Panc1 (cell line): ENCODE measurements at regions of chr10 and their contacts with region 1.

Region 1: DNA sequence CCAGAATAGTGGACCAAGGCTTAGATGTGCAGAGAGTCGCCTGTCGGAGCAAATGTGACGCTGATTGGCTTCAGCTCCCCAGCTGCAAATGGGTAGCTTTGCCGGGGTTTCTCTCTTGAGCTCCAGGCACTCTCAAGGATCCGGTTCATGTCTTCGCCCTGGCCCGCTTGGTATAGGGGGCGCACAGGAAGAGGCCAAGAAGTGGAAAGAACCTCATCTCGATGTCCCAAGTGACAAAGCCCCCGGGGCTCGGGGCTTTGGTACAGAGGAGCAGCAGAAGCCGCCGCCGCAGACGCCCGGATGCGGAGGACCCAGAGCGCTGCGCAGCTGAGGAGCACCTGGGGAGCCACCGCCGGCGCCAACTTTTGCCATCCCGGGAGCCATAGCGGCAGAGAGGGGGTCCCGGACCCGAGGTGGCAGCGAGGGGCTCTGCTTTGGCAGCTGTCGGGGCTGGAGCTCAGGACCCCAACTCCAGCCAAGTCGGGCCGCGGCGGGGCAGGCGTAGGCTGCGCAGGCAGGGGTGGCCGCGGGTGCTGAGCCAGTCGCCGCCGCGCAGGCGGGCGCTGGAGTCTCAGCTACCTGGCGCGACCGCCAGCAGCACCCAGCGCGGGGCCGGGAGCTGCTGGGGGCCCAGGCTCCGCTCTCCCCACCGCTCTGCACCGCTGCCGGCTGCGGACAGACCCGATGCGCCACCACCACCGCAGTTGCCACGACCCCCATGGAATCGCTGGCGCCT is 466.6 kb downstream of the XPNPEP1 start:
- DNase-seq: no peak
- ATAC-seq: no peak
- H3K4me3 ChIP-seq: no peak overlapping the region
- H3K27ac ChIP-seq: no peak overlapping the region
- H3K4me1 ChIP-seq: no peaks in the 10 kb centered on the region
- H3K27me3 ChIP-seq: no peaks in the 10 kb centered on the region
- CTCF ChIP-seq: no peak

Region 2: DNA sequence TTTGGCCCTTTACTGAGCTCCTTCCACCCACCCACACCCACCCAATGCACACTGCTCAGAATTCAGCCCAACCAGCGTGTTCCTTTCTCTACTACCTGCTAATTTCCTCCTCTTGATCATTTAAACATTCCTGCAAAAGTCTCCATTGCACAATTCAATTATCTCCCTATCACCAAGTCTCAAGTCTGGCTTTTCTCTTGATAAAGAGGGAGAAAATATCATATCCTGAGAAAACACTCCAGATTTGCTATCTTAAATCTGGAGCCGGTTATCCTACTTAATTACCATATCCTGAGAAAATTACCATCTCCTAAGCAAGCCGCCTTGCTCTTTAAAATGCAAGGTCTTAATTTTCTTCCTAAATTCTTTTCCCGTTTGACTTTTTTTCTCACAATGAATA is 38.9 kb before region 1 on chr10:
- CTCF ChIA-PET with region 1: no interaction called
- POLR2A ChIA-PET with region 1: no interaction called
- in situ Hi-C with region 1: no loop called
- intact Hi-C with region 1: loop called (anchors 1 kb)
- DNase-seq: no peak
- ATAC-seq: no peak
- H3K4me3 ChIP-seq: no peak overlapping the region
- H3K27ac ChIP-seq: no peak overlapping the region
- H3K4me1 ChIP-seq: no peaks in the 10 kb centered on the region
- H3K27me3 ChIP-seq: no peaks in the 10 kb centered on the region
- CTCF ChIP-seq: no peak

Region 3: GRCh38 chr10:109616359-109616980 is 159.7 kb after region 1 on chr10:
- CTCF ChIA-PET with region 1: no interaction called
- POLR2A ChIA-PET with region 1: no interaction called
- in situ Hi-C with region 1: no loop called
- intact Hi-C with region 1: no loop called
- DNase-seq: no peak
- ATAC-seq: no peak
- H3K4me3 ChIP-seq: no peak overlapping the region
- H3K27ac ChIP-seq: no peak overlapping the region
- H3K4me1 ChIP-seq: no peaks in the 10 kb centered on the region
- H3K27me3 ChIP-seq: no peaks in the 10 kb centered on the region
- CTCF ChIP-seq: no peak